ENCODE measurements at regions of chr17 and their contacts with region 1.

Region 1: DNA sequence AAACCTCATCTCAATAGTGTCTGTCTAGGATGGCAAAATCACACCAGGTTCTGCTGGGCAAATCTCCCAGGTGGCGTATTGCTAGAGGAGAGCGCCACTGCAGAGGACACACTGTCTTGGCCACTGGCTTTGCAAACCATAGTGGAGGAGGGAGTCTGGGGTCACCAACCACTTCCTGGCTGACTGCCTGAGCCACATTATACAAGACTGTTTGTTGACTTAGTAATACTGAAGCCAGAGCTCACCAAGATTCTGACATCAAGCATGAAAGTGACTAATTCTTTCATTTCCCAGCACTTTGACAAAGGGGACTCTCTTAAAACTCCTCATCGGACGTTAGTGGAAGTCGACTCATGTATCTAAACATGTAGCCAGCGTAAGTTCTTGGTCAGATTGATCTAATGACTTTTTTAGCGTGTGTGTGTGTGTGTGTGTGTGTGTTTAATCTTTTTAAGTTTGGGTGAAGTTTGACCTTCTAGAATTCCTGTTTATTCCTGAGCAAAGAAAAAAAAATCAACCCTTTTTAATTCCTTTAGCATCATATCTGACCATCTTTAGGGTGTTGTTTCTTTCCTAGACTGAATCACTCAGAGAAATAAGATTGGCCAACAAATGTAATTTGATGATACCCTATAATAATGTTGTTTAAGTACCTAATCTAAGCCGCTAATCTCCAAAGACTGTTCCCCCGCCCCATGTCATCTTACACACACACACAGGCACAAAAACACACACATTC is 13.7 kb downstream of the PITPNC1 start:
- DNase-seq: peak; percentile 99
- ATAC-seq: peak; percentile 96
- H3K4me3 ChIP-seq: no peak overlapping the region
- H3K27ac ChIP-seq: peak overlapping the region; percentile 93
- H3K4me1 ChIP-seq: peaks cover 22% of the 10 kb centered on the region
- H3K27me3 ChIP-seq: no peaks in the 10 kb centered on the region
- CTCF ChIP-seq: peak; percentile 40

Region 2: GRCh38 chr17:66348584-66349165 is 1042.1 kb before region 1 on chr17:
- CTCF ChIA-PET with region 1: no interaction called
- POLR2A ChIA-PET with region 1: no interaction called
- intact Hi-C with region 1: no loop called
- DNase-seq: peak; percentile 92
- ATAC-seq: peak; percentile 82
- H3K4me3 ChIP-seq: peak overlapping the region; percentile 51
- H3K27ac ChIP-seq: peak overlapping the region; percentile 90
- H3K4me1 ChIP-seq: peaks cover 62% of the 10 kb centered on the region
- H3K27me3 ChIP-seq: no peaks in the 10 kb centered on the region
- CTCF ChIP-seq: no peak

Region 3: DNA sequence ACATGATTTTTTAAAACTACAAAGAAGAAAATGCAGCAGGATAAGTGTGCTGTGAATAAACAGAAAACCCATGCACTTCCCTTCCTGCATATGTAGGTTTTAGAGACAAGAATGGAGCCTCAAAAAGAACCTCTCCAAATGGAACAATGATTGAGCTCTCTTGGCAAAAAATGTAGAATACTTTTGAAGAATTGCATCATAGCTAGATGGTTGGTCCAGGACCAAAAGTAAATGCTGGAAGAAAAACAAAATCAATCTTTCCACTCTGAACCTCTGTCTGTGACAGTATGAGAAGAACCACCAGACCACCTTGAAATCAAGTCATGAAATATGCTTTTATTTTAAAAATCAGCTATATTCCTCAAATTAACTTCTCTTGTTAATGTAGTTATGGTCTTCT is 163.3 kb before region 1 on chr17:
- CTCF ChIA-PET with region 1: no interaction called
- POLR2A ChIA-PET with region 1: no interaction called
- intact Hi-C with region 1: no loop called
- DNase-seq: no peak
- ATAC-seq: no peak
- H3K4me3 ChIP-seq: no peak overlapping the region
- H3K27ac ChIP-seq: no peak overlapping the region
- H3K4me1 ChIP-seq: peaks cover 3% of the 10 kb centered on the region
- H3K27me3 ChIP-seq: no peaks in the 10 kb centered on the region
- CTCF ChIP-seq: no peak

Region 4: GRCh38 chr17:67343251-67343650 is 47.6 kb before region 1 on chr17:
- CTCF ChIA-PET with region 1: no interaction called
- POLR2A ChIA-PET with region 1: no interaction called
- intact Hi-C with region 1: no loop called
- DNase-seq: no peak
- ATAC-seq: no peak
- H3K4me3 ChIP-seq: no peak overlapping the region
- H3K27ac ChIP-seq: no peak overlapping the region
- H3K4me1 ChIP-seq: peaks cover 14% of the 10 kb centered on the region
- H3K27me3 ChIP-seq: no peaks in the 10 kb centered on the region
- CTCF ChIP-seq: no peak

Region 5: DNA sequence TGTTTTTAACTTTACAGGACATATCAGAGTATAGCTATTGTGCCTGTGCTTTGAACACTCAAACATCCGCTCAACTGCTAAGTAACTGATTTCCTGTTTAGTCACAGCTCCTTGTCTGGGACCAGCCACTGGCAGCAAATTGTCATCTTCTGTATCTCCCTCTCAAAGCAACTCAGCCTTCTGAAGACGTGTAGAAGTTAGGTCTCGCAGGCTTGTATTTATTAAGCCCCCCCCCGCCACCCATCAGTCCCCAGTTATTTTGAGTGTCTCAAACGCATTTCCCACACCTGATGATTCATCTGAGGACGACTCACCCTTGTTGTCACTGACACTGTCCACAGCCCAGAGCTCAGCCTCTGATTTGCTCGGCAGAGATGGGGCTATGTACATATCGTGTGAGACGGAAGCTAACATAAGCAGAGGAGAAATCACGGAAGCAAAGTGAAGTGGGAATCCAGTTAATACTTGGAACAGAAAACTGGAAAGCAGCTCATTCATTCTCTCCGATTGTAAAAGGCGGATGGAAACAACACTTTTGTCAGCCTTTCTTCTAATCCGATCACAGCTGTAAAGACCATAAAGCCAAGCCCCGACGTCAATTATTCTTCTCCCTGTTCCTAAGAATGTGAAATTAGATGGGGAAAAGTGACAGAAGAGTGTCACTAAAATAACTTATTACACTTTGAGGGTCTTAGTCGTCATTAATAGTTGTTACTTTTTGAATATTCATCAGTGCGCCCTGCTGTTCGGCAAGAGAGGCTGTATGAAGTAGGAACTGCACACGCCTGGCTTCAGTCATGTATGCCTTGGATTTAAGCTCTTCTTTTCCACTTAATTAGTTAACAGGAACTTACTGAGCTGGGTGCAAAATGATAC is 50.5 kb after region 1 on chr17:
- CTCF ChIA-PET with region 1: no interaction called
- POLR2A ChIA-PET with region 1: no interaction called
- intact Hi-C with region 1: loop called (anchors 1 kb)
- DNase-seq: peak; percentile 89
- ATAC-seq: peak; percentile 97
- H3K4me3 ChIP-seq: peak overlapping the region; percentile 38
- H3K27ac ChIP-seq: peak overlapping the region; percentile 91
- H3K4me1 ChIP-seq: peaks cover 17% of the 10 kb centered on the region
- H3K27me3 ChIP-seq: no peaks in the 10 kb centered on the region
- CTCF ChIP-seq: no peak